CD8-positive, alpha-beta T cell (primary cell): ENCODE measurements at regions of chr7 and their contacts with region 1.

Region 1: DNA sequence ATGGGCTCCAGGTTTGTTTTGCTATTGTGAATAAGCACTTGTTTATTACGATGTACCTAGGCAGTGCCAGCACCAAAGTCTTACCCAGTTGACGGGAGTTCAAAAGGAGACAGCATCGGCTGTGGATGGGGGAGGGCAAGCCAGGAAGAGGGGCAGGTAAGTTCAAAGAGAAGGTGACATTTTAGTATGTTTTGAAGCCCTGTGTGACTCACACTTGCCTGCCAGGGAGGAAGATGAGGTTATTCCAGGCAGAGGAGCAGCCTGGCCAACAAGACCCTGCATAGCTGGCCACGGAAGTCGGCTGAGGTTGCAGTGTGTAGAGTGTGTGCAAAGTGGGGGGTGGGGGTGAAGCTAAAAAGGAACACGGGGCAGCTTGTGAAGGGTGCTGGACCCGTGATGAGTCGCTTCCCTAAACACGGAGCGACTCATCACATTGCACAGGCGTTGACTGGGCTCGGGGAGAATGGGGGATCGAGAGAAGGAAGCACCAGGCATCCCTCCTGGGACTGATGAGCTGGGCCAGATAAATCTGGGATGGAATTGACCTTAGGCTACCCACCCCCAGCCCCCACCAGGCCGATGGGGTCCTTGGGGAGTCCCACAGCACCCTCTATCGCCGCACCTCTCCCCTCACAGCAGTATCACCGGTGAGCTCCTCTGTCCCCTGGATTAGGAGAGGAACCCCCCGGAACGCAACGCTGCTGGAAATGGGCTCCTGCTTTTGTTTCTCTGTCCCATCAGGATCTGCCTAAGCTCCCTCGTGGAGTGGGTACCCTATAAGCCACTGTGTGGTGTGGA is 97.9 kb upstream of the IKZF1 start:
- DNase-seq: peak; percentile 46 to 89 (median 78)
- ATAC-seq: peak; percentile 74
- H3K4me3 ChIP-seq: peak overlapping the region in 1 of 2 experiments; percentile 12
- H3K4me3 Mint-ChIP-seq: peak overlapping the region; percentile 80
- H3K27ac ChIP-seq: peak overlapping the region; percentile 3 to 37
- H3K27ac Mint-ChIP-seq: peak overlapping the region; percentile 92
- H3K4me1 ChIP-seq: peaks cover 74% of the 10 kb centered on the region
- H3K4me1 Mint-ChIP-seq: peaks cover 76% of the 10 kb centered on the region
- H3K27me3 ChIP-seq: no peaks in the 10 kb centered on the region
- H3K27me3 Mint-ChIP-seq: no peaks in the 10 kb centered on the region
- CTCF ChIP-seq: no peak

Region 2: GRCh38 chr7:50229964-50230363 is 23.3 kb after region 1 on chr7:
- CTCF ChIA-PET with region 1: interaction called, 23 read pairs
- POLR2A ChIA-PET with region 1: interaction called, 18 read pairs
- intact Hi-C with region 1: loop called in 1 of 2 experiments (anchors 2 kb)
- DNase-seq: peak in 2 of 9 experiments; percentile 44 to 60
- ATAC-seq: no peak
- H3K4me3 ChIP-seq: no peak overlapping the region
- H3K4me3 Mint-ChIP-seq: no peak overlapping the region
- H3K27ac ChIP-seq: no peak overlapping the region
- H3K27ac Mint-ChIP-seq: no peak overlapping the region
- H3K4me1 ChIP-seq: peaks cover 28% of the 10 kb centered on the region
- H3K4me1 Mint-ChIP-seq: peaks cover 39% of the 10 kb centered on the region
- H3K27me3 ChIP-seq: no peaks in the 10 kb centered on the region
- H3K27me3 Mint-ChIP-seq: no peaks in the 10 kb centered on the region
- CTCF ChIP-seq: peak; percentile 37

Region 3: DNA sequence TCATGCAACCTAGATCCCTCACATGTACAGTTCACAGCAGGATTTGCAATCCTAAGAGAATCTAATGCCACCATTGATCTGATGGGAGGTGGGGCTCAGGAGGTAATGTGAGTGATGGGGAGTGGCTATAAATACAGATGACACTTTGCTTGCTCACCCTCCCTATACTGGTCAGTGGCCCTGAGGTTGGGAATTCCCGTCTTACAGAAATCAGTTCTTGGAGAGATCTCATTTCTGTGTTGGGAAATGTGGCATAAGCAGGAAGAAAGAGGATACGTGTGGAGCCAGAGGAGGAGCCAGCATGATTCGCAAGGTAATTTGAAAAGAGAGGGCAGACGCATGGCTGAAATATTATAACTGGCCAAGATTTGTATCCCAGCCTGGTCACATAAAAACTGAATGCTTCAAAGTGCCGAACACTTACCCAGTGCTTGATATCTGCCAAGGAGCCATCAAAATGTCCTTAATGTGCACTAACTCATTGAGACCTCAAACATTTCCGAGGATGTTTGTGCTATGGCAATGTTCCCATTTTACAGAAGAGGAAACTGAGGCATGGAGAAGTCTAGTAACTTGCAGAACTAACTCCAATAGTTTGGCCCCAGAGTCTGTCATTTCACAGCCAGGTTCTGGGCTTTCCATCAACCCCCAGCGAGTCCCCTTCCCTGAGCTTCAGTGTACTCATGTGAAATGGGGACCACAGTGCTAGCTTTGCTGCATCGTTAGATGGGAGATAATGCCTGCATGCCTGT is 92.3 kb after region 1 on chr7:
- CTCF ChIA-PET with region 1: interaction called, 14 read pairs
- POLR2A ChIA-PET with region 1: interaction called, 5 read pairs
- intact Hi-C with region 1: loop called in 1 of 2 experiments (anchors 2 kb)
- DNase-seq: no peak
- ATAC-seq: no peak
- H3K4me3 ChIP-seq: no peak overlapping the region
- H3K4me3 Mint-ChIP-seq: no peak overlapping the region
- H3K27ac ChIP-seq: no peak overlapping the region
- H3K27ac Mint-ChIP-seq: peak overlapping the region; percentile 6
- H3K4me1 ChIP-seq: peaks cover 33% of the 10 kb centered on the region
- H3K4me1 Mint-ChIP-seq: peaks cover 47% of the 10 kb centered on the region
- H3K27me3 ChIP-seq: no peaks in the 10 kb centered on the region
- H3K27me3 Mint-ChIP-seq: no peaks in the 10 kb centered on the region
- CTCF ChIP-seq: no peak

Region 4: GRCh38 chr7:50342616-50343114 is 136.0 kb after region 1 on chr7:
- CTCF ChIA-PET with region 1: interaction called, 44 read pairs
- POLR2A ChIA-PET with region 1: interaction called, 8 read pairs
- intact Hi-C with region 1: no loop called
- DNase-seq: peak in 5 of 9 experiments; percentile 65 to 91 (median 79)
- ATAC-seq: peak; percentile 48
- H3K4me3 ChIP-seq: peak overlapping the region in 1 of 2 experiments; percentile 25
- H3K4me3 Mint-ChIP-seq: peak overlapping the region; percentile 72
- H3K27ac ChIP-seq: peak overlapping the region; percentile 55 to 90
- H3K27ac Mint-ChIP-seq: no peak overlapping the region
- H3K4me1 ChIP-seq: peaks cover 99% of the 10 kb centered on the region
- H3K4me1 Mint-ChIP-seq: peaks cover 78% of the 10 kb centered on the region
- H3K27me3 ChIP-seq: no peaks in the 10 kb centered on the region
- H3K27me3 Mint-ChIP-seq: no peaks in the 10 kb centered on the region
- CTCF ChIP-seq: no peak

Region 5: DNA sequence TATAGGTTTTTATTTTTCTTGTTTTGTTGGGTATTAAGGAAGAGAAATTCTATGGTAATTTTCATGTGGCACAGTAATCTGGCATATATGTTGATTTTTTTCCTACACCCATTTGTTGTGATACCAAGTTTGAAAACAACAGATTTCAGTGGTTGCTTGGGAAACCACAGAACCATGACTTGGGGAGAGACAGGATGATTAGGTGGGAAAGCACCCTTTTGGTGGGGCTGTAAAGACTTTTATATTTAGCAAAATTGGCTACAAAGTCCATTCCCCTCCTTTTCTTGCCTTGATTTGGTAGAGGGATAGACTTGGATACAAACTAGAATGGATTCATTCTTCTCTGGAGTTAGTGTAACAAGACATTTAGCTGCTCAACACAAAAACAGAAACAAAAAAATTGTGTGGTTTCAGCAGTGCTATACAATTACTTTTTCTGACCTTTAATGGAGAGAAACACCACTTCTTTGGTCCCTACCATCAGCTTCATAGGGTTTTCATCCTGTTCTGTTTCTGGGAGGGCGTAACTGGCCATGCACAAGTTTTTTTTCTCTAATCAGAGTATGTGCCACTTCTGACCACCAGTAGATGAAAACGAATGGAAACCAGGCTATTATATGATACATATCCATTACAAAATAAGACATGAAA is 190.8 kb after region 1 on chr7:
- CTCF ChIA-PET with region 1: interaction called, 15 read pairs
- POLR2A ChIA-PET with region 1: interaction called, 4 read pairs
- intact Hi-C with region 1: no loop called
- DNase-seq: peak in 3 of 9 experiments; percentile 33 to 84 (median 69)
- ATAC-seq: peak; percentile 19
- H3K4me3 ChIP-seq: no peak overlapping the region
- H3K4me3 Mint-ChIP-seq: peak overlapping the region; percentile 13
- H3K27ac ChIP-seq: peak overlapping the region in 1 of 2 experiments; percentile 80
- H3K27ac Mint-ChIP-seq: peak overlapping the region; percentile 95
- H3K4me1 ChIP-seq: peaks cover 64% of the 10 kb centered on the region
- H3K4me1 Mint-ChIP-seq: peaks cover 76% of the 10 kb centered on the region
- H3K27me3 ChIP-seq: no peaks in the 10 kb centered on the region
- H3K27me3 Mint-ChIP-seq: no peaks in the 10 kb centered on the region
- CTCF ChIP-seq: no peak

Region 6: GRCh38 chr7:50679218-50680007 is 472.8 kb after region 1 on chr7:
- CTCF ChIA-PET with region 1: interaction called, 3 read pairs
- POLR2A ChIA-PET with region 1: no interaction called
- intact Hi-C with region 1: loop called (anchors 5 to 10 kb)
- DNase-seq: peak in 2 of 9 experiments; percentile 63 to 75
- ATAC-seq: peak; percentile 67
- H3K4me3 ChIP-seq: no peak overlapping the region
- H3K4me3 Mint-ChIP-seq: no peak overlapping the region
- H3K27ac ChIP-seq: no peak overlapping the region
- H3K27ac Mint-ChIP-seq: no peak overlapping the region
- H3K4me1 ChIP-seq: no peaks in the 10 kb centered on the region
- H3K4me1 Mint-ChIP-seq: peaks cover 2% of the 10 kb centered on the region
- H3K27me3 ChIP-seq: no peaks in the 10 kb centered on the region
- H3K27me3 Mint-ChIP-seq: peaks cover 5% of the 10 kb centered on the region
- CTCF ChIP-seq: peak; percentile 68

Region 7: GRCh38 chr7:51209426-51209825 is 1002.8 kb after region 1 on chr7:
- CTCF ChIA-PET with region 1: no interaction called
- POLR2A ChIA-PET with region 1: no interaction called
- intact Hi-C with region 1: no loop called
- DNase-seq: no peak
- ATAC-seq: no peak
- H3K4me3 ChIP-seq: no peak overlapping the region
- H3K4me3 Mint-ChIP-seq: no peak overlapping the region
- H3K27ac ChIP-seq: no peak overlapping the region
- H3K27ac Mint-ChIP-seq: no peak overlapping the region
- H3K4me1 ChIP-seq: no peaks in the 10 kb centered on the region
- H3K4me1 Mint-ChIP-seq: no peaks in the 10 kb centered on the region
- H3K27me3 ChIP-seq: no peaks in the 10 kb centered on the region
- H3K27me3 Mint-ChIP-seq: no peaks in the 10 kb centered on the region
- CTCF ChIP-seq: no peak